ENCODE measurements at regions of chr4 and their contacts with region 1.

Region 1: DNA sequence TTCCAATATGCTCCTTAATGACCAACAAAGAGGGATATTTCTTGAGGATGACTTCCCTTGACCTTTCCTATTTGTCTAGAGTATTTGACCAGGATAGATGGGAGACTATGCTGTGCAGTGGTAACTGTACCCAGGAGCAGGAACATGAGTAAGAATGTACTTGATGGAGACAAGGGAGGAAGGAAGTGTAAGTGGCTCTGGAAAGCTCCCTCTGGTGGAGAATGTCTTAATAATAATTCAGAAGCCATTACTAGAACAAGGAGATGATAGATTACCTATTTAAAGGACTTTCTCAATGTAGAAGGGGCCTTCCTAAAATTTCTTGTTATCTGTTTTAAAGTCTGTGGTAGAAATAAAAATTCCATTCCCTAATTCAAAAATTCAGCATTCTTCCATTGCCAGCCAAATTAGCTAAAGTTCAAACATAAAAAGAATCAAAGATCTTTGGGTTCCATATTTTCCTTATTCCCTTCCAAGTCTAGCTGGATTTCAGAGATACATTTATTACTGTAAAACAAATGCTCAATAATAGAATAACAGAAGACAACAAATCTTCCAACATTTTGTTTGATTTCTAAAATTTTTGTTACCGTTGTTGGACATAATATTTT is 83.8 kb downstream of the GRID2 start:
- DNase-seq: peak; percentile 30
- ATAC-seq: peak; percentile 80
- H3K4me3 ChIP-seq: no peak overlapping the region
- H3K27ac ChIP-seq: no peak overlapping the region
- H3K4me1 ChIP-seq: no peaks in the 10 kb centered on the region
- H3K27me3 ChIP-seq: no peaks in the 10 kb centered on the region
- CTCF ChIP-seq: peak; percentile 57
- EP300 ChIP-seq: no peak
- POLR2A ChIP-seq: no peak
- RAD21 ChIP-seq: no peak

Region 2: GRCh38 chr4:90419124-90419711 is 1968.3 kb before region 1 on chr4:
- CTCF ChIA-PET with region 1: interaction called, 14 read pairs
- POLR2A ChIA-PET with region 1: no interaction called
- in situ Hi-C with region 1: loop called (anchors 25 kb)
- intact Hi-C with region 1: loop called (anchors 1 kb)
- DNase-seq: peak; percentile 16
- ATAC-seq: peak; percentile 71
- H3K4me3 ChIP-seq: no peak overlapping the region
- H3K27ac ChIP-seq: no peak overlapping the region
- H3K4me1 ChIP-seq: no peaks in the 10 kb centered on the region
- H3K27me3 ChIP-seq: no peaks in the 10 kb centered on the region
- CTCF ChIP-seq: peak; percentile 65
- EP300 ChIP-seq: no peak
- POLR2A ChIP-seq: no peak
- RAD21 ChIP-seq: no peak

Region 3: GRCh38 chr4:92328095-92328494 is 59.5 kb before region 1 on chr4:
- CTCF ChIA-PET with region 1: no interaction called
- POLR2A ChIA-PET with region 1: no interaction called
- in situ Hi-C with region 1: no loop called
- intact Hi-C with region 1: no loop called
- DNase-seq: no peak
- ATAC-seq: no peak
- H3K4me3 ChIP-seq: no peak overlapping the region
- H3K27ac ChIP-seq: no peak overlapping the region
- H3K4me1 ChIP-seq: no peaks in the 10 kb centered on the region
- H3K27me3 ChIP-seq: no peaks in the 10 kb centered on the region
- CTCF ChIP-seq: no peak
- EP300 ChIP-seq: no peak
- POLR2A ChIP-seq: no peak
- RAD21 ChIP-seq: no peak

Region 4: DNA sequence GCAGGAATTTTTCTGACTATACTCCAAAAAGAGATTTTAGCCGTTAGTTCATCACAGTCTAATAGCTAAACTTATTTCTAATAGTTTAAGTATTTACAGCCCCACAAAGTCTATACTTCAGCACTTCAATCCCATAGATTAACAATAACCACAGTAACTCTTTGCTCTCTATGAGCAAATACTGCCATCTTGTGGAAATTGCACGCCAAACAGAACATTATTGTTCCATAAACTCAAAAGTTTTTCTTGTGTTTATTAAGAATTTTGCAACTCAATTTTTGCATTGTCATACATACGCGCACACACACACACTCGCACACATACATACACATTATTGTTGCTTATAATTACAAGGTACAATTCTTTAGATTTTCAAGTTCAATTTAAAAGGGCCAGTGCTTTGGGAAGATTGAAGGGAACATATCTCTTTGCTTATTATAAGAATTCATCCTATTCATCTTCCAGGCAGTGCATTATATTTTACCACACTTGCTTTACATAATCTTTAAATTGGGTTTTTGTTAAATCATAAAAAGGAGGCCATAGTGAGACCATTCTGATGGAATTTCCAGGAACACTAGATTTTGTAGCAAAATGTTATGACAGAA is 1377.2 kb after region 1 on chr4:
- CTCF ChIA-PET with region 1: no interaction called
- POLR2A ChIA-PET with region 1: no interaction called
- in situ Hi-C with region 1: no loop called
- intact Hi-C with region 1: loop called (anchors 5 kb)
- DNase-seq: peak; percentile 18
- ATAC-seq: peak; percentile 71; the same call in 2 of the 3 replicates
- H3K4me3 ChIP-seq: no peak overlapping the region
- H3K27ac ChIP-seq: no peak overlapping the region
- H3K4me1 ChIP-seq: no peaks in the 10 kb centered on the region
- H3K27me3 ChIP-seq: no peaks in the 10 kb centered on the region
- CTCF ChIP-seq: peak; percentile 75
- EP300 ChIP-seq: no peak
- POLR2A ChIP-seq: no peak
- RAD21 ChIP-seq: peak; percentile 56; the same call in 1 of the 2 replicates